A549 (cell line): ENCODE measurements at regions of chr2 and their contacts with region 1.

Region 1: DNA sequence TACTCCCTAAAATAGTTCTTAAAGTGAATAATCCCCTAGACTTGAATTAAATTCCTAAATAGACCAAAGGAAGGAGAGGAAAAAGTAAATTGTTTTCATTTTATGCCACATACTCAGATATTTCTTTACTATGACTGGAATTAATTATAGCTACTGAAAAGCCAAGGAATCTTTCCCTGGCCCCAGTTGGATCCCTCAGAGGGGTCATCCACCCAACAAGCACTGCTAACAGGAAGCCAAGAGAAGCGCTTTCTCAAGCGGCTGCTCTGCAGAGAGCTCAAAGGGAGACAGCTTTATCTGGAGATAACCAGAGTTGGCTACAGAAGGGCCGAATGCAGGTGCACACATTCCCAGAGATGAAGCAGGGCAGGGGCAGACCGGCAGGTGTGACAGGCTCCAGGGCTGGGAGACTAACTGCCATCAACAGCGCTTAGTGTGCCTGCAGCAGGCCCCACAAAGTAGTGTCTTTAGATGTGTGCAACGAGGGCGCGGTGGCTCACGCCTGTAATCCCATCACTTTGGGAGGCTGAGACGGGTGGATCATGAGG is 51.1 kb downstream of the POLR1A start:
- DNase-seq: no peak
- ATAC-seq: no peak
- H3K4me3 ChIP-seq: no peak overlapping the region
- H3K27ac ChIP-seq: no peak overlapping the region
- H3K4me1 ChIP-seq: no peaks in the 10 kb centered on the region
- CTCF ChIP-seq: no peak
- EP300 ChIP-seq: no peak
- POLR2A ChIP-seq: no peak
- RAD21 ChIP-seq: no peak

Region 2: DNA sequence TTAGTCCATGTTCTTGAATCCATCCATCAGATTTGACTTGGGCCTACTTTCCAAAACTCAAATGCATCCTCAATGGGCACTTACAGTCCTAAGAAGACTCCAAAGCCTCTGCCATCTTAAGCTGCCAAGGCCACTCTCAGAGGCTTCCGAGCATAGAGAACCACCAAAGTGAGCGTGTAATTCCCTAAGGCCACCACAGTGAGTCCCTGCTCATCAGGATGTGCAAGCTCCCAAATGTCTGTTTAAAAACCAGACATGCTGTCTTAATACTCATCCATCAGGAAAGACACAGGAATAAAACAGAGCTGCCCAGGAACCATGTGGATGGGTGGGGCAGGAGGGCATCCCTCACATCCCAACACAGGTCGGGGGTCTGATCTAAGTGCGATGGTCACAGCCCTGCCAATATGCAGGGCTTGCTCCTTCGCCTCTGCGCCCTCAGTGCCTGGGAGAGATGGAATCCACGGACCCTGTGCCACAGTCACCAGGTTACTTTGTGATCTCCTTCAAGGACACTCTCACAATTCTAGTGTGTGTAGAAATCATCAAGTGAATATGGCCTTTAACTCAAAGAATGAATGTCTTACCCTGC is 29.3 kb before region 1 on chr2:
- CTCF ChIA-PET with region 1: no interaction called
- POLR2A ChIA-PET with region 1: no interaction called
- DNase-seq: peak in 1 of 2 experiments; percentile 57
- ATAC-seq: peak; percentile 45 to 58; a peak in 4 of 6 replicates
- H3K4me3 ChIP-seq: no peak overlapping the region
- H3K27ac ChIP-seq: no peak overlapping the region; a peak in 1 of 6 replicates
- H3K4me1 ChIP-seq: 0 out of 3 replicates have a peak, but pooled peaks cover 6% of the 10 kb centered on the region
- CTCF ChIP-seq: no peak
- EP300 ChIP-seq: no peak
- POLR2A ChIP-seq: no peak
- RAD21 ChIP-seq: no peak

Region 3: DNA sequence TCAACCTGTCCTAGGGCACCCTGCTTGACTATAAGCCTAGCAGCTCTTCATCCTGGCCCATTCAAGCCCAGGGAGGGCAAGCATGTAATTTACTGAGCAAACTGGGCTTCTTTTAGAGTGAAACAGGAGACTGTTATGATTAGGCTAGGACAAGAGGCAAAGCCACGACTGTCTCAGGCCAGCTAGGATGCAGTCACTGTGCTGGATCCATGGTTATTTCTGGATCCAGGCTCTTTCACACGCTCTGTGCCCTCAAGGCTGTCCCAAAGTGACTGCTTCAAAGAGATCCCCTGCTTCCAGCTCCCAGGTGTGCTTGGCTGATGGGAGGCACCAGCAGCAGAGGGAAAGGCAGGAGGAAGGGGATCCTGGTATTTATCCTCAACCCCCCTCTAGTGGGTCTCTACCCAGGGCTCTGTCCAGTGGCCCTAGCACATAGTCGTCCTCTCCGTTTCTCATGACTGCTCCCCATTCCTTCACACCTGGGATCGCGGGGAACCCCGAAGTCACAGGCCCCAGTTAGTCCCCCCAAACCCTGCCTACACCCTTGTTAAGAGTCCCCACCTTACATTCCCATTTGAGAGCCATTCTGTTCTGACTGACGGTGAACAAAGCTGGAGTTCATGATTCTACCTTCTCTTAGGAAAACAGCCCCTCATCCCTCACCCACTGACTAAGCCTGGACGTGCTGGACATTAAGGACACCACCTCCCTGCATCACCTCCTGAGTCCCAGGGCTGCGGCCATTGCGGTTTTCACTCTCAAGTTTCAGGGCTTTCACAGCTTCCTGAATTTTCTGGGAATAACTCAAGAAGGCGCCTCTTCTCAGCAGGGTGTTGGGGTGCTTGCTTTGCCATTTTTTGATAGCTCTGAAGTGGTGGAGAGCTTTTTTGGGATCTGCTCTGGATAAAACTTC is 12.1 kb before region 1 on chr2:
- CTCF ChIA-PET with region 1: interaction called, 10 read pairs
- POLR2A ChIA-PET with region 1: no interaction called
- DNase-seq: no peak
- ATAC-seq: no peak
- H3K4me3 ChIP-seq: no peak overlapping the region
- H3K27ac ChIP-seq: no peak overlapping the region
- H3K4me1 ChIP-seq: no peaks in the 10 kb centered on the region; the same call in 2 of the 3 replicates
- CTCF ChIP-seq: no peak
- EP300 ChIP-seq: no peak
- POLR2A ChIP-seq: no peak
- RAD21 ChIP-seq: no peak

Region 4: DNA sequence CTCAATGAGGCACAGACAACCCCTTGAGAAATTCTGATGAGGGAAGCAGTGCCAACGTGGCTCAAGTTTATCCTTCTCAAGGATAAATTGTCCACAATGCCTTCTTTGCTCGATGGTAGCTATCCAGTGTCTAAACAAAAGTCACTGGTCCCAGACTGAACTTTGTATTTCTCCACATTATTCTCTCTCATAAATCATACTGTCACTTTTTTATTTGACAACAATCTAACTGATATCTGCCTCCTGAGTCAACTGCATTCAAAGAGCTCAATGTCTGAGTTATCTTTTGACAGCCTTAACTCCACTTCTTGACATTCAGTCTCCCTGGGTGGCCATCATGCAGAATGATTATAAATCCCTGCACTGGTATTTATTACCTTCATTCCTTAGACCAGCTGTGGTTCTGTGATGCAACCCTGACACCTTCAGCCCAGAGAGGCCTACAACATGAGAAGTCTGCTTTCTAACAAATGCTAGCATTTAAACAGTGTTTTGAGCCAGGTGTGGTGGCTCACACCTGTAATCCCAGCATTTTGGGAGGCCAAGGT is 102.5 kb after region 1 on chr2:
- CTCF ChIA-PET with region 1: no interaction called
- POLR2A ChIA-PET with region 1: no interaction called
- DNase-seq: no peak
- ATAC-seq: no peak
- H3K4me3 ChIP-seq: no peak overlapping the region
- H3K27ac ChIP-seq: no peak overlapping the region
- H3K4me1 ChIP-seq: no peaks in the 10 kb centered on the region
- CTCF ChIP-seq: no peak
- EP300 ChIP-seq: no peak
- POLR2A ChIP-seq: no peak
- RAD21 ChIP-seq: no peak